AG04450 (cell line): ENCODE measurements at regions of chr1 and their contacts with region 1.

Region 1: DNA sequence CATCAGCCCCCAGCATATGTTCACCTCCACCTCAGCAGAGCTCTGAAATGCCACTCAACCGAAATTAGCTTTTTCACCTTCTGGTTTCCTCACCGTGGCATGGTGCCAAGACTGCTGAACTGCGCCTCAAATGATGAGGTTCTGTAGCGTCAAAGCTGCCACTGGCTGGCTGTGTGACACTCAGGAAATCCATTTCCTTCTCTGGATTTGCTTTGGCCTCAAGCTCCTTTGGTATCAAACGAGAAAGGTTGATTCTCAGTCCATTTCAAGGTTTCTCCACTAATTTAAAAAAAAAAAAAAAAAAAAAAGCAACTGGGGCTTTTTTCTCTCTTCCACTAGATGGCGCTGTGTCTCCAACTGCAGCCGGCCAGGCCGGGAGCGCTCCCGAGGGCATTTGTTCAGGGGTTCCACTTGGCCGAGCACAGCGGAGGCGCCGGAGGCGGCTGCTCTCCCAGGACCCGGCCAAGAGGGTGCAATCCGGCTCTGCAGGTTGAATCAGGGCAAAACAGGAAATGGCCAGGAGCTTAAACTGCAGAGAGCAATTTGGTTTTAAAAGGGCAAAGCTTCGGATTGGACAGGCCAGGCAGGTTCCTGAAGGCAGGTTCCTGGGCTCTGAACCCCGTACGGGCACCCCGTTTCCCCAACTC is 26.5 kb upstream of the PLA2G2C start:
- DNase-seq: peak; percentile 18
- H3K4me3 ChIP-seq: no peak overlapping the region
- H3K27ac ChIP-seq: no peak overlapping the region
- H3K27me3 ChIP-seq: peaks cover 23% of the 10 kb centered on the region
- CTCF ChIP-seq: peak; percentile 86

Region 2: DNA sequence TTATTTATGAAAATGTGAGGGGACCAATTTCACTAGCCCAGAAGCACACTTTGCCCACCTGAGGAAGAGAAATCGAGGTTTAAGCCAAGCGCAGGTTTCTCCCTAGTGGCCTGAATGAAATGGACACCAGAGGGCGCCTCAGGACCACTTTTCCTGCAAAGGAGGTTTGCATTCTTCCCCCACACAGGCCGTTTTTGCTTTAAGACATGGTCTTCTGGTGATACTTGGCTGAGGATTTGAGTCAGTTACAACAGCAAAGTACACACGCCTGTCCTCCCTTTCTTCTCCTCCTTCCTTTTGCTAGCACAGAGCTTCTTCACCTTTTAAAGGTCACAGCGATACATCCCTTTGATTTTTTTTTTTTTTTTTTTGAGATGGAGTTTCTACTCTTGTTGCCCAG is 294.8 kb before region 1 on chr1:
- CTCF ChIA-PET with region 1: interaction called, 18 read pairs
- POLR2A ChIA-PET with region 1: no interaction called
- DNase-seq: peak; percentile 60
- H3K4me3 ChIP-seq: no peak overlapping the region
- H3K27ac ChIP-seq: no peak overlapping the region
- H3K27me3 ChIP-seq: peaks cover 11% of the 10 kb centered on the region
- CTCF ChIP-seq: peak; percentile 96

Region 3: DNA sequence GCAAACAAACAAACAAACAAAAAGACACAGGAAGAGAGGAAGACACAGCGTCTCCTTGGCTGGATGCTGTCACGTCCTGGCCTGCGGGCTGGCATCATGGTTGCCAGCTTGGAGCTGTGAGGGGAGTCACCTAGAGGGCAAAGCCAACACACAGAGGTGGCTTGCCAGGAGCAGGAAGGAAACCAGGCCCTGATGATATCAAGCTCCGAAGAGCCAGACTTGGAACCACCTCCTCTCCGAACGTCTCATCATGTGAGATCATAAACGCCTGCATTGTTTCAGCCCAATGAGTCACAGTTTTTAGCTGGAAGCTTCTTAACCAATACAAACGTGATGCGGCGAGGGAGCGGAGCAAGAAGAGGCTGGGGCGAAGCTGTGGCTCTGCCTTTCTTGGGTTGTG is 102.1 kb before region 1 on chr1:
- CTCF ChIA-PET with region 1: no interaction called
- POLR2A ChIA-PET with region 1: no interaction called
- DNase-seq: peak; percentile 10
- H3K4me3 ChIP-seq: no peak overlapping the region
- H3K27ac ChIP-seq: no peak overlapping the region
- H3K27me3 ChIP-seq: peaks cover 25% of the 10 kb centered on the region
- CTCF ChIP-seq: no peak

Region 4: DNA sequence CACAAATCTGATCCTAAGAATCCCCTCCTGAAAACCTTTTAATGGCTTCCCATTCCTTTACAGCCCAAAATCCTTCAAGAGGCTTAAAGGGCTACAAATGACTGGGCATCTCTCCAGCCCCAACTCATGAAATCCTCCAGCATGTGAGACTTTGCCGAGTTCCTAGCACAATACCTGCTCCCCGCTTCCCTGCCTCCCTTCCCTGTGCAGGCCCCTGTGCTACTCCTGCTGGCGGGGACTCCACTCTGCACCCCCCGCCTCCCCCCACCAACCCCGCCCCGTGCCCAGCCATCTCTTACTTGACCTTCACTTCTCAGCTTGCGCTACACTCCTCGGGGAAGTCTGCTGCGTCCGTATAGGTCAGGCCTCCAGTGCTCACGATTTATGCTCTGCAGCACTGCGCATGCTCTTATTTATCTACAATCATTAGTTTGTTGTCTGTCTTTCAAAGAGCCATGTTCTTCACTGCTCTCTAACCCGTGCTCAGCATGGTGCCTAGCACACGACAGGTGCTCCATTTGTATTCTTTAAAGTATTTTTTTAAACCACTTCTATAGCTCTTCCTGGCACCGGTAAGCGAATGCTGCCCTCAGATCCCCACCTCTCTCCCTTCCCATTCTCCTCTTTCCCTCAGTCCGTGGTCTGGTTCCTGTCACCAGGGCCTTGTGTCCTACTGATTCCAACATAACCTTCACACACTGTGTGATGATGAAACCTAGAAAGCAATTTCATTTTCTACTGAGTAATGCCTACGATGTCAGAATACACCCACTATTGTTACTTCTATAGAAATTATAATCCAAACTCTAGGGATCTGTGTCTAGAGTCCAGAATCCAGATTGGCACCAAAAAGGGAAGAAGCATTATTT is 11.0 kb after region 1 on chr1:
- CTCF ChIA-PET with region 1: interaction called, 25 read pairs
- POLR2A ChIA-PET with region 1: no interaction called
- DNase-seq: no peak
- H3K4me3 ChIP-seq: no peak overlapping the region
- H3K27ac ChIP-seq: no peak overlapping the region
- H3K27me3 ChIP-seq: peaks cover 50% of the 10 kb centered on the region
- CTCF ChIP-seq: no peak

Region 5: GRCh38 chr1:20312310-20312709 is 99.5 kb after region 1 on chr1:
- CTCF ChIA-PET with region 1: no interaction called
- POLR2A ChIA-PET with region 1: no interaction called
- DNase-seq: no peak
- H3K4me3 ChIP-seq: no peak overlapping the region
- H3K27ac ChIP-seq: no peak overlapping the region
- H3K27me3 ChIP-seq: peaks cover 6% of the 10 kb centered on the region
- CTCF ChIP-seq: no peak

Region 6: DNA sequence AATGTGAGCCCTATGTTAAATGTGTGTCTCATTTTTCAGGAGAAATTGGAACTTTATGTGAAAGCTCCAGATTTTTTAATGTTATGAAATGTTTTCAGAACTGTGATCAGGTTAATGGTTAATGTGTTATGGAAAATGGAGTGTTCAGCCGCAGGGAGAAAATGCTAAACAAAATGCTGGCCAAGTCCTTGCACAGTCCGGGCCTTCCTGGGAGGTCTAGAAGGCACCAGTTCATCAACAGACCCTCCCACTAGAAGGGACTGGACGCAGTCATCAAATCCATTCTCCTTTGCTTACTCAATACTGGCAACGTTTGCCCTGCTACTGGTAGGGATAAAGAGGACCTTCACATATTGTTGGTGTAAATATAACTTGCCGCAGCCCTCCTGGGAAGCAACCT is 121.3 kb after region 1 on chr1:
- CTCF ChIA-PET with region 1: interaction called, 12 read pairs
- POLR2A ChIA-PET with region 1: no interaction called
- DNase-seq: no peak
- H3K4me3 ChIP-seq: no peak overlapping the region
- H3K27ac ChIP-seq: no peak overlapping the region
- H3K27me3 ChIP-seq: peaks cover 22% of the 10 kb centered on the region
- CTCF ChIP-seq: no peak

Region 7: DNA sequence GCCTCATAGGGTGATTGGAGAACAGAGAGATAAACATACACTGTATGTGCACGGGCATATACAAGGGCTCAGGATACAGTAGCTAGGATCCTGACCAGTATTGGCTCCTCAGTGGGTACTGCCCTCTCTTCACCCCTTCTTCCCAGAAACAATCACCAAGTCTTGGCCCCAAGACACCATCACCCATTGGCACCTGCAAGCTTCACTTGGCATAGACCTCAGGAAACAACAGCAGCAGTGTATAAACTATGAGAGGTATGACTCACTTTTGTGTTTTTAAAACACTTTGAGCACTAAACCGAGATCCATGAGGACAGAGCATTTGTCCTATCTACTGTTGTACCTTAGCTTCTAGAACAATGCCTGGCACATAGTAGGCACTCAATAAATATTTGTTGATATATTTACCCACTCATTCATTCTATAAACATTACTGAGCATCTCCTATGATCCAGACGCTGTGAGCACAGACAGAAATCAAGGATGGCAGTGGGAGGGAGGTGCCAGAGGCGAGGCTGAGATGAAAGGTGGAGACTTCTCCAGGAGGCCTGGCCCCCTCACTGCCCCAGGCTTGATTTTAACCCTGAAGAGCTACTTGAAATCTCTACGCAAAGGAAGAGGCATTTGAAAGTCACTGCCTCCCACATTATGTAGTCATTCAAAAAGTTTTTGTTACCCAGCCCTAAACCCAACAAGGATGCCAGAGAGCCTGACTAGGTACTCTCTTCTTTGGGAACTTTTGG is 178.0 kb after region 1 on chr1:
- CTCF ChIA-PET with region 1: interaction called, 18 read pairs
- POLR2A ChIA-PET with region 1: no interaction called
- DNase-seq: no peak
- H3K4me3 ChIP-seq: no peak overlapping the region
- H3K27ac ChIP-seq: no peak overlapping the region
- H3K27me3 ChIP-seq: peaks cover 60% of the 10 kb centered on the region
- CTCF ChIP-seq: no peak

Region 8: DNA sequence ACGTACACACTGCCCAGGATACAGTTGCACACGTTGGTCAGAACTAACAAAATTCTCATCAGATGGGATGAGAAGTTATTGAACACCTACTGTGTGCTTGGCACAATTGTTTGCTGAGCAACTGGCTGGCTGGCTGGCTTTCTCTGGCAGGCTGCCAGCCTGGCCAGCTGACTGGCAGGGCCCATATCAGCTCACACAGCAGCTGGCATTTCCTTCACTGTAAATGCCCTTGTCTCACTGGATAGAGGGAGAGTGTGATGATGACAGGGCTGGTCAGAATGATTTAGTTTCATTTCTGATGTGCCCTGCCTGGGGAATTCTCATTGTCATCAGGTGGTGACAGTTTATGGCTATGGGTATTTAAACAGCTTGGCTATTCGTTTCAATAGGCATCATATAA is 257.4 kb after region 1 on chr1:
- CTCF ChIA-PET with region 1: interaction called, 11 read pairs
- POLR2A ChIA-PET with region 1: no interaction called
- DNase-seq: no peak
- H3K4me3 ChIP-seq: no peak overlapping the region
- H3K27ac ChIP-seq: no peak overlapping the region
- H3K27me3 ChIP-seq: peaks cover 28% of the 10 kb centered on the region
- CTCF ChIP-seq: no peak